Gastrocnemius medialis (tissue), 4 donors: ENCODE measurements at regions of chr16 and their contacts with region 1.

Region 1: GRCh38 chr16:89383082-89384003 is 107.0 kb downstream of the ANKRD11 start:
- DNase-seq: peak in 1 of 2 donors; percentile 45
- ATAC-seq: peak; percentile 49 to 58
- H3K4me3 ChIP-seq: no peak overlapping the region
- H3K27ac ChIP-seq: peak overlapping the region in 3 of 4 donors; percentile 31 to 53 (median 34)
- H3K4me1 ChIP-seq: peaks cover 65 to 77% of the 10 kb centered on the region in 2 donors
- H3K27me3 ChIP-seq: no peaks in the 10 kb centered on the region
- CTCF ChIP-seq: no peak
- POLR2A ChIP-seq: no peak

Region 2: DNA sequence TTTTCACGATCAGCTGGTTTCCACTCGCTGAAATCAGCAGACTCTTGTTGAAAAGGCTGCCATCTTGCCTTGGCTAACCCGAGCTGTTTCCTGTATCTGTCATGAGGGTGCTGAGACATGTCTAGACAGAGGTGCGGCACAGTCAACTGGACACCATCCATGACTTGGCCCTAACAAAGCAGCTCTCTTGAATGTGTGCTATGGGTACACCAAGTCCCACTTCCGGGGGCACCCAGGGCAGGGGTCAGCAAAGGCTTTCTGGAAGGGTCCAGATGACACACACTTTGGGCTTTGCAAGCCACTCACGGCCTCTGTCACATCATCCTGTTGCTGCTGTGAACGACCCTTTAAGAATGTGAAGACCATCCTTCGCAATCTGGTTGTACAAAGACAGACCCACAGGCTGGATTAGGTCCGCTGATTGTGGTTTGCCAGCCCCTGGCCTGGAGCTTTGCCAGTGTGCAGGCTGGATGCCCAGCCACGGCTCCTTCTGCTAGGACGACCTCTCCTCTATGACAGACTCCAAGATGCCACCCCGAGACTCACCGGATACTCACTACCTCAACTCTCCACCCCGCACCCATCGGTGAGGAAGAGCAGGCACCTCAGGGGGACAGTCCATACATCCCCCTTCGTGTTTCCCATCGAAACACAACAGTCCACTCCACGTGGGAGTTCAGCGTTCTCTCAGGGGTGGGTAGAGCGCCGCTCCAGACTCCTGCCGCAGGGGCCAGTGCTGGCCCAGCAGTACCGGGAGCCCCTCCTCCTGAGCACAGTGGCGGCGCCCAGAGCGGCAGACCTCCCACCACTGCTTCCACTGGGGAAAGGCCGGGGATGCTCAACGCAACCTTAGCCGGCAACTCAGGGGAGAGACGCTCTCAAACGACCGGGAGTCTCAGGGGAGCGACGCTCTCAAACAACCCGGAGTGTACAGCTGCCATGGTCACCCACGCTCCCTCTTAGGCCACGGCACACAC is 16.5 kb before region 1 on chr16:
- in situ Hi-C with region 1: no loop called
- intact Hi-C with region 1: loop called (anchors 2 kb)
- DNase-seq: no peak
- ATAC-seq: no peak
- H3K4me3 ChIP-seq: no peak overlapping the region
- H3K27ac ChIP-seq: no peak overlapping the region
- H3K4me1 ChIP-seq: peaks cover 83 to 84% of the 10 kb centered on the region in 2 donors
- H3K27me3 ChIP-seq: no peaks in the 10 kb centered on the region
- CTCF ChIP-seq: no peak
- POLR2A ChIP-seq: no peak

Region 3: GRCh38 chr16:89422905-89423630 is 39.7 kb after region 1 on chr16:
- in situ Hi-C with region 1: no loop called
- intact Hi-C with region 1: loop called (anchors 5 kb)
- DNase-seq: no peak
- ATAC-seq: peak; percentile 22 to 24
- H3K4me3 ChIP-seq: no peak overlapping the region
- H3K27ac ChIP-seq: peak overlapping the region; percentile 64 to 71 (median 68)
- H3K4me1 ChIP-seq: peaks cover 68 to 73% of the 10 kb centered on the region in 2 donors
- H3K27me3 ChIP-seq: no peaks in the 10 kb centered on the region
- CTCF ChIP-seq: no peak
- POLR2A ChIP-seq: no peak